B cell (primary cell): ENCODE measurements at regions of chr15 and their contacts with region 1.

Region 1: GRCh38 chr15:77633134-77633912 is 611 bp upstream of the LINGO1 start:
- DNase-seq: peak; percentile 76
- ATAC-seq: peak; percentile 93
- H3K4me3 ChIP-seq: peak overlapping the region; percentile 17 to 60 (median 52)
- H3K4me3 Mint-ChIP-seq: peak overlapping the region; percentile 85
- H3K27ac ChIP-seq: no peak overlapping the region
- H3K27ac Mint-ChIP-seq: no peak overlapping the region
- H3K4me1 ChIP-seq: peaks cover 21 to 27% of the 10 kb centered on the region in 2 donors
- H3K4me1 Mint-ChIP-seq: peaks cover 15% of the 10 kb centered on the region
- H3K27me3 ChIP-seq: peaks cover 0 to 66% (median 25%) of the 10 kb centered on the region in 4 experiments
- H3K27me3 Mint-ChIP-seq: peaks cover 52% of the 10 kb centered on the region
- CTCF ChIP-seq: peak; percentile 93

Region 2: DNA sequence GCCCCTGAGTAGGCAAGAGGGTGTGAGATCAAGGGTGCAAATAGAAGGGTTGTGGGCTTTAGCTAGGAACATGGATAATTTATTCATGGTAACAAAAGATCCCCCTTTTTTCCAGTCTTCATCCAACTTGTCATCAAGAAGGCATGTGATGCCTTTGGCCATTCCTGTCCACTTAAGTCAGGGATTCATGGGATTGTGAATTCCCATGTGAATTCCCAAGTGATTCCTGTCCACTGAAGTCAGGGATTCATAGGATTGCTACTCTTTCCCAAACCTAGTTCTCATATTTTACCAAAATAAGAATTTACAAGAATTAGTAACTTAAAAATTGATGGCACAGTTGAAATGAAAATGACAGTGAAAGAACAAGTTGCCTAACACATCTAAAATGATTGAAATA is 171.8 kb before region 1 on chr15:
- CTCF ChIA-PET with region 1: no interaction called
- POLR2A ChIA-PET with region 1: no interaction called
- intact Hi-C with region 1: no loop called
- DNase-seq: no peak
- ATAC-seq: no peak
- H3K4me3 ChIP-seq: no peak overlapping the region
- H3K4me3 Mint-ChIP-seq: no peak overlapping the region
- H3K27ac ChIP-seq: no peak overlapping the region
- H3K27ac Mint-ChIP-seq: no peak overlapping the region
- H3K4me1 ChIP-seq: peaks cover 8 to 9% of the 10 kb centered on the region in 2 donors
- H3K4me1 Mint-ChIP-seq: peaks cover 14% of the 10 kb centered on the region
- H3K27me3 ChIP-seq: no peaks in the 10 kb centered on the region
- H3K27me3 Mint-ChIP-seq: no peaks in the 10 kb centered on the region
- CTCF ChIP-seq: no peak

Region 3: GRCh38 chr15:77496710-77497103 is 136.6 kb before region 1 on chr15:
- CTCF ChIA-PET with region 1: no interaction called
- POLR2A ChIA-PET with region 1: no interaction called
- intact Hi-C with region 1: no loop called
- DNase-seq: peak; percentile 78
- ATAC-seq: peak; percentile 75
- H3K4me3 ChIP-seq: no peak overlapping the region
- H3K4me3 Mint-ChIP-seq: no peak overlapping the region
- H3K27ac ChIP-seq: no peak overlapping the region
- H3K27ac Mint-ChIP-seq: no peak overlapping the region
- H3K4me1 ChIP-seq: peaks cover 19 to 27% of the 10 kb centered on the region in 2 donors
- H3K4me1 Mint-ChIP-seq: peaks cover 30% of the 10 kb centered on the region
- H3K27me3 ChIP-seq: no peaks in the 10 kb centered on the region
- H3K27me3 Mint-ChIP-seq: no peaks in the 10 kb centered on the region
- CTCF ChIP-seq: peak; percentile 90

Region 4: DNA sequence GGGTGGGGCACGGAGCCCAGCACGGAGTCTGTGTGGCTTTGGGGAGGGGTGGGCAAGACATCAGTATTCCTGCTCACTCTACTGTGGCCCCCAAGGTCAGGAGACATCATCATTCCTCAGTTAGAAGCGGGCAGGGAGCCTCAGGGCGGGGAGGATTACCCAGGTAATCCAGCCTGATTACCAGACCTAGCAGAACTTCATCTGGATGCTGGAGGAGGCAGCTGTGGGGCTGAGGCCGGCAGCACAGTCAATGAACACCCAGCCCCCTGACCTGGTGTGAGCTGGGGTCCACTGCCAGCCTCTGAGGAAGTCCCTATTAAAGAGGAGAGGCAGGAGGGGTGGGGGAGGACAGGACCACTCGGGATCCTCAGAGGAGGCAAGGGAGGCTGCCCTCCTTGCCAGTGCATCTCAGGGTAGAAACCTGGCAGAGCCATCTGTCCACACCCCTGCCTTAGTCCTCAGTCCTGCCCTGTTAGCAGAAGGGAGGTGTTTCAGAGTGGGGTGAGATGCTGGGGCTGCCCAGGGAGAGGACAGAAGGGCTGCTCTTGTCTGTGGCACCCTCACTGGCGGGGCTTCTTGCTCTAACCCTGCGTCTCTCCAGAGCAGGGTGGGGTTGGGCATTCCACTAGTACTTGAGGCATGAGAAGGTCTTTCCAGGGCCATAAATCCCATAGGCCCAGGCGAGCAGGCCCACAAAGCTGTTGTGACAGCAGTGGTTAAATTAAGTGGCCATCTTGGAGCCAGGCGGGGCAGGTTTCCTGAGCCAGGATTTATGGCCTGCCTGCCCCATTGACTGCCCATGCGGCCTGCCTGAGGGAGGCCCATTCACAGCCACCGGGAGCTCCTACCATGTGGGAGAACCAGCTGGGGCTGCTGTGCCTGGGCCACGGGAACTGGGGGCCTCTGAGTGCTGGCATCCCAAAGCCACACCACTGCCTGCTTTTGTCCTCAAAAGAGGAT is 82.8 kb before region 1 on chr15:
- CTCF ChIA-PET with region 1: no interaction called
- POLR2A ChIA-PET with region 1: no interaction called
- intact Hi-C with region 1: no loop called
- DNase-seq: no peak
- ATAC-seq: no peak
- H3K4me3 ChIP-seq: no peak overlapping the region
- H3K4me3 Mint-ChIP-seq: no peak overlapping the region
- H3K27ac ChIP-seq: no peak overlapping the region
- H3K27ac Mint-ChIP-seq: no peak overlapping the region
- H3K4me1 ChIP-seq: no peaks in the 10 kb centered on the region
- H3K4me1 Mint-ChIP-seq: peaks cover 7% of the 10 kb centered on the region
- H3K27me3 ChIP-seq: no peaks in the 10 kb centered on the region
- H3K27me3 Mint-ChIP-seq: no peaks in the 10 kb centered on the region
- CTCF ChIP-seq: no peak

Region 5: GRCh38 chr15:77617476-77618230 is 15.7 kb before region 1 on chr15:
- CTCF ChIA-PET with region 1: interaction called, 10 read pairs
- POLR2A ChIA-PET with region 1: no interaction called
- intact Hi-C with region 1: no loop called
- DNase-seq: no peak
- ATAC-seq: no peak
- H3K4me3 ChIP-seq: no peak overlapping the region
- H3K4me3 Mint-ChIP-seq: no peak overlapping the region
- H3K27ac ChIP-seq: no peak overlapping the region
- H3K27ac Mint-ChIP-seq: no peak overlapping the region
- H3K4me1 ChIP-seq: no peaks in the 10 kb centered on the region
- H3K4me1 Mint-ChIP-seq: no peaks in the 10 kb centered on the region
- H3K27me3 ChIP-seq: no peaks in the 10 kb centered on the region
- H3K27me3 Mint-ChIP-seq: peaks cover 9% of the 10 kb centered on the region
- CTCF ChIP-seq: no peak

Region 6: GRCh38 chr15:77646104-77646694 is 12.9 kb after region 1 on chr15:
- CTCF ChIA-PET with region 1: interaction called, 12 read pairs
- POLR2A ChIA-PET with region 1: no interaction called
- intact Hi-C with region 1: no loop called
- DNase-seq: no peak
- ATAC-seq: no peak
- H3K4me3 ChIP-seq: no peak overlapping the region
- H3K4me3 Mint-ChIP-seq: no peak overlapping the region
- H3K27ac ChIP-seq: no peak overlapping the region
- H3K27ac Mint-ChIP-seq: no peak overlapping the region
- H3K4me1 ChIP-seq: no peaks in the 10 kb centered on the region
- H3K4me1 Mint-ChIP-seq: no peaks in the 10 kb centered on the region
- H3K27me3 ChIP-seq: peaks cover 0 to 2% (median 0%) of the 10 kb centered on the region in 4 experiments
- H3K27me3 Mint-ChIP-seq: peaks cover 11% of the 10 kb centered on the region
- CTCF ChIP-seq: no peak